OCI-LY7 (cell line): ENCODE measurements at regions of chr2 and their contacts with region 1.

Region 1: DNA sequence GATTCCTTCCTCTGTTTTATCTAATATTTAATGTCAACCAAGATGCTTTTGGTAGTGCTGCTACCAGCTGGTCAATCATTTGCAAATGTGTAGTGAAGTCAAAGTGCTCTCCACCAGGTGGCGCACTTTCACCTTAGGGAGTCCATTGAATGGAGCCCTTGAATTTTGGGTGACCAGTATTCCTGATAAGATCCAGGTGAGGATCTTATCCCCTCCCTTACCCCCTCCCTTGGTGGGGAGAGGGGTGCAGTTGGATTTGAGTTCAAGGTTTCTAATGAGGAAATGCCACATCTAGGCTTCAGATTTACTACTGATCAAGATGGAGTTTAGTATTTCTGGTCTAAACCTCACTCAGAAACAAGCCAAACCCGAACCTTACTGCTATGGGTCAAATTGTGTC is 12.0 kb upstream of the E2F6 start:
- DNase-seq: peak; percentile 88
- H3K4me3 ChIP-seq: no peak overlapping the region
- H3K27ac ChIP-seq: no peak overlapping the region
- H3K4me1 ChIP-seq: no peaks in the 10 kb centered on the region
- CTCF ChIP-seq: peak; percentile 97

Region 2: DNA sequence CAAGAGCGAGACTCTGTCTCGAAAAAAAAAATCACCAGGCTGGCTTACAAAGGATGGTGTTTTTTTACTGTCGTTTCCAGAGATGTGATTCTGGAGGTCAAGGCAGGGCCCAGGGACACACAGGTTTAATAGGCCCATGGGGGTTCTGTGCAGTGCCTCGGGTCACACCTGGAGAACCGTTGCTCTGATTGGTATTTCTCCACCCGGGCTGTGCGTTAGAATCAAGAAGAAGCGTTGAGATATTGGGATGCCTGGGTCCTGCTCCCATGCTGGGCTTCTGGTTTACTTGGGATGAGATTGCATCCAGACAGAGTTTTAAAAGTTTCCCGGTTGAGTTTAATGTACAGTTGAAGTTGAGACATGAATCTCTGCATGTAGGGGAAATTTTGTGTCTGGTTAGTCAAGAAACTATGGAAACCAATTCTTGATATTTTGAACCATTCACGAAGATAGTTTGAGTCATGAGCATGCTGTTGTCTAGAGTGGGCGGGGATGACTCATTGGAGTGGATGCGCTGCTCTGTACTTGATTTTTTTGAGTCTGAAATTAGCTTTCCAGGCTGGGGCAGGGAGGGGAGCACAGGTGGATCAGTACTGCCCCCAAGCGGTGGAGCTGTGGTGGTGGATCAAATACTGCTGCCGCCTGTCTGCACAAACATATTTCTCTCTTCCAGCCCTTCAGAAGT is 106.0 kb after region 1 on chr2:
- CTCF ChIA-PET with region 1: no interaction called
- POLR2A ChIA-PET with region 1: no interaction called
- intact Hi-C with region 1: loop called (anchors 1 kb)
- DNase-seq: peak; percentile 59
- H3K4me3 ChIP-seq: no peak overlapping the region
- H3K27ac ChIP-seq: no peak overlapping the region
- H3K4me1 ChIP-seq: no peaks in the 10 kb centered on the region
- CTCF ChIP-seq: peak; percentile 94

Region 3: GRCh38 chr2:11681722-11682589 is 204.0 kb after region 1 on chr2:
- CTCF ChIA-PET with region 1: no interaction called
- POLR2A ChIA-PET with region 1: no interaction called
- intact Hi-C with region 1: loop called (anchors 2 kb)
- DNase-seq: peak; percentile 38
- H3K4me3 ChIP-seq: no peak overlapping the region
- H3K27ac ChIP-seq: no peak overlapping the region
- H3K4me1 ChIP-seq: no peaks in the 10 kb centered on the region
- CTCF ChIP-seq: peak; percentile 94